Posterior vena cava (tissue), 2 donors: ENCODE measurements at regions of chr6 and their contacts with region 1.

Region 1: GRCh38 chr6:168778201-168778600 is 337.2 kb downstream of the SMOC2 start:
- DNase-seq: peak; percentile 87

Region 2: GRCh38 chr6:168877821-168878282 is 99.7 kb after region 1 on chr6:
- intact Hi-C with region 1: loop called in 1 of 2 experiments (anchors 10 kb)
- DNase-seq: no peak

Region 3: DNA sequence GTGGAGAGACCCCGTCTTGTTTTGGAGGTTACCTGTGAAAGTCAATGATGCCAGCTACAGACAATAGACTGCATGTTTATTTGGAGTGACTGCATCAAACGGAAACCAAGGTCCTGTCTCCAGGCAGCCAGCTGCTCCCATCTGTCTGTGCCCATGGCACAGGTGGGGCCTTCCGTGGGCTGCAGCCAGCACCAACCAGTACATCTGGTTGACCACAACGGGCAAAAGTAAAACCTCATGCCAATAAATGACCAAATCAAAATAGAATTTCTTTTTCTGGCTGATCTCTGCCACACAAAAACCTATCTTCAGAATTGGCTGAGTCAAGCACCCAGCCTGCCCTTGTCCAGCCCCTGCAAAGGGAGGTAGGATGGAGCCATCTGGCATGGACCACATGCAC is 1479.2 kb after region 1 on chr6:
- intact Hi-C with region 1: loop called in 1 of 2 experiments (anchors 10 kb)
- DNase-seq: peak; percentile 46